ENCODE measurements at regions of chr9 and their contacts with region 1.

Region 1: GRCh38 chr9:20684035-20684872 is at the start of gene FOCAD:
- DNase-seq: peak; percentile 96
- H3K4me3 Mint-ChIP-seq: peak within 1 kb of the TSS; percentile 89
- H3K27ac Mint-ChIP-seq: peak within 1 kb of the TSS; percentile 79
- H3K4me1 Mint-ChIP-seq: peaks cover 33% of the 10 kb centered on the region
- H3K27me3 Mint-ChIP-seq: no peaks in the 10 kb centered on the region
- total RNA-seq, gene FOCAD: 31.2 and 33.7 TPM in 2 replicates

Region 2: GRCh38 chr9:19230356-19231125 is 1453.7 kb before region 1 on chr9 and contains the start of gene DENND4C:
- intact Hi-C with region 1: loop called (anchors 2 kb)
- DNase-seq: peak; percentile 83
- H3K4me3 Mint-ChIP-seq: peak within 1 kb of the TSS; percentile 77
- H3K27ac Mint-ChIP-seq: peak within 1 kb of the TSS; percentile 73
- H3K4me1 Mint-ChIP-seq: peaks cover 8% of the 10 kb centered on the region
- H3K27me3 Mint-ChIP-seq: no peaks in the 10 kb centered on the region
- total RNA-seq, gene DENND4C: 18.4 and 21.1 TPM in 2 replicates

Region 3: GRCh38 chr9:20043035-20043434 is 641.2 kb before region 1 on chr9:
- intact Hi-C with region 1: loop called (anchors 5 kb)
- DNase-seq: no peak
- H3K4me3 Mint-ChIP-seq: peak overlapping the region; percentile 78
- H3K27ac Mint-ChIP-seq: peak overlapping the region; percentile 79
- H3K4me1 Mint-ChIP-seq: peaks cover 45% of the 10 kb centered on the region
- H3K27me3 Mint-ChIP-seq: no peaks in the 10 kb centered on the region

Region 4: DNA sequence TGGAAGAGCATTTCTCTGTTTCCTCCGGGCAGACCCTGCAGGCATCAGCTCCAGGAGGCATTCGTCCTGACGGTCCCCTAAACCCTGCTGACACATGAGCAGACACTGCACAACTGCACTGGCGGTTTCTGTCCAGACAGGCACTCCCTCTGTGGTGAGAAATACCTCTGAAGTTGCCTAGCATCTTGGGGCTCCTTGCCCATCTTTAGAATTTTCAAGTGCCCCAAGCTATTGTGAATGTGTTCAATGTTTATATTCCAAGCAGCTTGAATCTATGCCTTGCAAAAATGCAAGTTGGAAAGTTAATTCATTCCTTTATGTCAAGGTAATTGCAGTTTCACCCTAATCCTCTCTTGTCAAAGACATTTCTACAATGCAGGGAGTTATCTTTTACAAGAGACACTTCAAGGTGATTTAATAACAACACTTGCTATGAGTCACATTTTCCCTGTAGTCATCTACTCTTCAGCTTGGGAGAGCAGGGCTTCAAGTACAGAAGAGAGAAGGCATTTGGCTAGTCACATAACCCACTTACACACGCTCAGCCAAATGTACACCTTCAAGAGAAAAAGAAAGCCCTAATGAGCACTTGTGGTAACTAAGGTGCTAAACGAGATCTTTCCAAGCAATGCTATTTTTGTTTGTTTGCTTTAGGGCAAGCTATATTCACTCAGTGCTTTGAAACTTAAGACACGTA is 364.5 kb before region 1 on chr9:
- intact Hi-C with region 1: loop called (anchors 1 kb)
- DNase-seq: peak; percentile 37
- H3K4me3 Mint-ChIP-seq: peak overlapping the region; percentile 35
- H3K27ac Mint-ChIP-seq: peak overlapping the region; percentile 91
- H3K4me1 Mint-ChIP-seq: peaks cover 91% of the 10 kb centered on the region
- H3K27me3 Mint-ChIP-seq: no peaks in the 10 kb centered on the region

Region 5: DNA sequence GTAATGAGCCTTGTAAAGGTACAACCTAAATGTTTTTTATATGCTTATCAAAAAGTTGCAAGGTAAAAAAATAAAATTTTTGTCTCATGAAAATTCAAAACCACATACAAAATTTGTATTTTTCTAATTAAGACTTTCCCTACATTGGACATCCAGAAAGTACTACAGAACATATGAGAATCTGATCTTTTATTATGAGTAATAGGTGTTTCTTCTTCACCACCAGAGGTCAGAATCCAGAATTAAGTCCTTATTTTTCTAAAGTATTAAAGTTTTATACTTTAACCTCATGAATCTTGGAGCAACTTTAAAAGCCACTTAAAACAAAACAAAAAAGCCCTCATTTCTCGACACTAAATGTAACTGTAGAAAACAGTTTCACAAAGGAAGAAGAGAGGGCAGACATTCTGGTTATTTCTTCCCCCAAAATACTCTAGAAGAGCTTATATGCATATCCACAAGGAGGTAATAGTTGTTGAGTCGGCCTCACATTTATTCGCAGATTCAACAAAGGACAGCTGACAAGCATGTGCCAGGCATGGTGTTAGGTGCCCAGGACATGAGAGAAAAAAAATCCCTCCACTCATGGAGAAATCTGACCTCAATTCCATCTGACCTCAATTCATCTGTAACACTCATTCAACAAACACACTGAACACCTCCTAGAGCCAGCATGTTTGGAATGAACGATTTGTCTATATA is 131.2 kb before region 1 on chr9:
- intact Hi-C with region 1: loop called (anchors 2 kb)
- DNase-seq: peak; percentile 1
- H3K4me3 Mint-ChIP-seq: peak overlapping the region; percentile 59
- H3K27ac Mint-ChIP-seq: peak overlapping the region; percentile 64
- H3K4me1 Mint-ChIP-seq: peaks cover 76% of the 10 kb centered on the region
- H3K27me3 Mint-ChIP-seq: no peaks in the 10 kb centered on the region

Region 6: DNA sequence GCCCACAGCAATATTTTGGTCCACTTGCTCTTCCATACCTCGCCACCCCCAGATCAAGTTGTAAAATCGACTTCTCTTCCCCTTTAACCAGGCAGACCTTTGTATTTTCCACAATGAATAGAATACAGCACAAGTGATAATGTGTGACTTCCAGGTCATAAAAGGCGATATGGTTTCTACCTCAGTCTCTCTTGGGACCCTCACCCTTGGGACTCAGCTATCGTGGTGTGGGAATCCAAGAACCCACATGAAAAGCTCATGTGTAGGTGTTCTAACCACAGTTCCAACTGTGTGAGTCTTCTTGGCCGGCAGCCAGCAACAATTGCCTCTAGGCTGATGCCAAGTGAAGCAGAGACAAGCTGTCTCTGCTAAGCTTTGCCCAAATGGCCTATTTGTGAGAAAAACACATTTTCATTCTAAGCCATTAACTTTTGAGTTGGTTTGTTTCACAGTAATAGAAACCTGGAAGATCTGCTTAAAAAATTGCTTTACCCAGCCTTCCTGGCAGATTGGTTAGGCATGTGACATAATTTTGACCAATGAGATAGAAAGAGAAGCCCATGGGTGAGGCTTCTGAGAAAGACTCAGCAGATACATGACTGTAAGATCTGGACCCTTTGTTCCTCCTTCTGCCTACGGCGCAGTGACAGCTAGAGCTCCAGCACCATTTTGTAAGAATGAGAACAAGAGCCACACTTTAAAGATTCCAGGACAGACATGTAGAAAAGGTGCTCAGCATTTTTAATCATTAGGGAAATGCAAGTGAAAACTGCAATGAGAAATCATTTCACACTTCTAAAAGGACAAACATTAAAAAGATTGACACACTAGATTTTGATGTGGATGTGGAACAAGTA is 43.7 kb before region 1 on chr9:
- intact Hi-C with region 1: loop called (anchors 5 kb)
- DNase-seq: peak; percentile 33
- H3K4me3 Mint-ChIP-seq: peak overlapping the region; percentile 8
- H3K27ac Mint-ChIP-seq: no peak overlapping the region
- H3K4me1 Mint-ChIP-seq: peaks cover 11% of the 10 kb centered on the region
- H3K27me3 Mint-ChIP-seq: peaks cover 9% of the 10 kb centered on the region

Region 7: GRCh38 chr9:20670395-20670794 is 13.9 kb before region 1 on chr9:
- intact Hi-C with region 1: no loop called
- DNase-seq: no peak
- H3K4me3 Mint-ChIP-seq: no peak overlapping the region
- H3K27ac Mint-ChIP-seq: no peak overlapping the region
- H3K4me1 Mint-ChIP-seq: no peaks in the 10 kb centered on the region
- H3K27me3 Mint-ChIP-seq: peaks cover 6% of the 10 kb centered on the region

Region 8: GRCh38 chr9:21031091-21031807 is 347.0 kb after region 1 on chr9 and contains the start of gene HACD4:
- intact Hi-C with region 1: loop called (anchors 2 kb)
- DNase-seq: peak; percentile 67
- H3K4me3 Mint-ChIP-seq: peak within 1 kb of the TSS; percentile 63
- H3K27ac Mint-ChIP-seq: peak within 1 kb of the TSS; percentile 27
- H3K4me1 Mint-ChIP-seq: peaks cover 23% of the 10 kb centered on the region
- H3K27me3 Mint-ChIP-seq: no peaks in the 10 kb centered on the region
- total RNA-seq, gene HACD4: 2.7 and 3.0 TPM in 2 replicates

Measured in activated T-helper 1 cell treated with anti-CD3 and anti-CD28 coated beads, Interleukin-12 subunit alpha, Interleukin-12 subunit beta, Interleukin-2, Interleukin-4 antibody, amounts not matched to agents 30 ng/mL and 10 ng/mL and 1 ng/mL, durations not matched to agents 14 hours and 24 hours and 36 hours (primary cell).